ENCODE measurements at regions of chr5 and their contacts with region 1.

Region 1: GRCh38 chr5:53023969-53024368 is 34.8 kb downstream of the ITGA2 start:
- DNase-seq: no peak
- H3K4me3 Mint-ChIP-seq: no peak overlapping the region
- H3K27ac Mint-ChIP-seq: no peak overlapping the region
- H3K4me1 Mint-ChIP-seq: no peaks in the 10 kb centered on the region
- H3K27me3 Mint-ChIP-seq: no peaks in the 10 kb centered on the region

Region 2: GRCh38 chr5:52693280-52693679 is 330.7 kb before region 1 on chr5:
- CTCF ChIA-PET with region 1: no interaction called
- POLR2A ChIA-PET with region 1: no interaction called
- DNase-seq: peak; percentile 33
- H3K4me3 Mint-ChIP-seq: no peak overlapping the region
- H3K27ac Mint-ChIP-seq: no peak overlapping the region
- H3K4me1 Mint-ChIP-seq: peaks cover 4% of the 10 kb centered on the region
- H3K27me3 Mint-ChIP-seq: peaks cover 10% of the 10 kb centered on the region

Region 3: GRCh38 chr5:52771343-52772039 is 252.5 kb before region 1 on chr5:
- CTCF ChIA-PET with region 1: no interaction called
- POLR2A ChIA-PET with region 1: no interaction called
- DNase-seq: peak; percentile 66
- H3K4me3 Mint-ChIP-seq: peak overlapping the region; percentile 33
- H3K27ac Mint-ChIP-seq: peak overlapping the region; percentile 67
- H3K4me1 Mint-ChIP-seq: peaks cover 72% of the 10 kb centered on the region
- H3K27me3 Mint-ChIP-seq: peaks cover 14% of the 10 kb centered on the region

Region 4: GRCh38 chr5:52909192-52909591 is 114.8 kb before region 1 on chr5:
- CTCF ChIA-PET with region 1: no interaction called
- POLR2A ChIA-PET with region 1: no interaction called
- DNase-seq: no peak
- H3K4me3 Mint-ChIP-seq: no peak overlapping the region
- H3K27ac Mint-ChIP-seq: no peak overlapping the region
- H3K4me1 Mint-ChIP-seq: peaks cover 5% of the 10 kb centered on the region
- H3K27me3 Mint-ChIP-seq: no peaks in the 10 kb centered on the region

Region 5: DNA sequence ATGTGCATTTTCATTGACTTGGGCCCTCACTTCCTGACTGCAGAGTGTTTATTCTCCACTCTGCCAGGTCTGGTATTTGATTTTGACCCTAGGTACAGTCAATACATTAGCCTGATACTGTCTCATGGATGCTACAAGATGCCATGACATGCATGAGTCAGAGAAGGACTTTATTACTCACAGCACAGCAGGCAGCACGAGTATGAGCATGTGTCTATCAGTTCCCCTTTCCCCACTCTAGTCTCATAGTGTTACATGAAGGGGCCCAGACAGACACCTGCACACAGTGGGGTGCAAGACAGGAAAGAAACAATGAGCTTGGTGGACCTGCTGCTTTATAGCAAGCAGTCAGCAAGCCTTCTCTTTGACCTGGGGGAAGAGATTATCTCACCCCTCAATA is 15.2 kb before region 1 on chr5:
- CTCF ChIA-PET with region 1: interaction called, 3 read pairs
- POLR2A ChIA-PET with region 1: interaction called, 11 read pairs
- DNase-seq: peak; percentile 58
- H3K4me3 Mint-ChIP-seq: no peak overlapping the region
- H3K27ac Mint-ChIP-seq: peak overlapping the region; percentile 60
- H3K4me1 Mint-ChIP-seq: peaks cover 83% of the 10 kb centered on the region
- H3K27me3 Mint-ChIP-seq: peaks cover 19% of the 10 kb centered on the region

Region 6: DNA sequence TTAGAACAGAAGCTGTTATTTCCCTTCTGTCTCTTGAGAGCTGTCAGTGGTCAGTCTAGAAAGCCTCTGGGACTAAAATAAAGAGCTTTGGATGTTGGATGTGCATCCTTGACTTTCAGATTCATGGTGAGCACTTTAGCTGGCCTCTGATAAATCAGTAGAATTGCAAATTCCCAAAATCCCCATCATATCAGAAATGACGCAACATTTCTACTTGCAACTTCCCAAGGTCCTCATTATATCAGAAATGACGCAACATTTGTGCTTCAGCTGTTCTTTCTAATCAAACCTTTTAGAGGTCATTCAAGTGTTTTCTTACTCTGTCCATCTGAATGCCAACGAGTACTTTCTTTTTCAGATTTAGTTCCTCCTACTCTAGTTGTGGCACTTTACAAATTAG is 252.9 kb after region 1 on chr5:
- CTCF ChIA-PET with region 1: no interaction called
- POLR2A ChIA-PET with region 1: no interaction called
- DNase-seq: no peak
- H3K4me3 Mint-ChIP-seq: no peak overlapping the region
- H3K27ac Mint-ChIP-seq: no peak overlapping the region
- H3K4me1 Mint-ChIP-seq: no peaks in the 10 kb centered on the region
- H3K27me3 Mint-ChIP-seq: peaks cover 2% of the 10 kb centered on the region